CD8-positive, alpha-beta T cell (primary cell): ENCODE measurements at regions of chr2 and their contacts with region 1.

Region 1: GRCh38 chr2:24971536-24972314 is at the start of gene DNAJC27:
- DNase-seq: peak; percentile 92 to 99 (median 98)
- ATAC-seq: peak; percentile 87
- H3K4me3 ChIP-seq: peak within 1 kb of the TSS; percentile 68 to 98
- H3K4me3 Mint-ChIP-seq: peak within 1 kb of the TSS; percentile 96
- H3K27ac ChIP-seq: peak within 1 kb of the TSS; percentile 93 to 100
- H3K27ac Mint-ChIP-seq: peak within 1 kb of the TSS; percentile 100
- H3K4me1 ChIP-seq: peaks cover 17% of the 10 kb centered on the region
- H3K4me1 Mint-ChIP-seq: peaks cover 27% of the 10 kb centered on the region
- H3K27me3 ChIP-seq: no peaks in the 10 kb centered on the region
- H3K27me3 Mint-ChIP-seq: no peaks in the 10 kb centered on the region
- CTCF ChIP-seq: no peak
- total RNA-seq, gene DNAJC27: 18.9 to 19.1 TPM

Region 2: DNA sequence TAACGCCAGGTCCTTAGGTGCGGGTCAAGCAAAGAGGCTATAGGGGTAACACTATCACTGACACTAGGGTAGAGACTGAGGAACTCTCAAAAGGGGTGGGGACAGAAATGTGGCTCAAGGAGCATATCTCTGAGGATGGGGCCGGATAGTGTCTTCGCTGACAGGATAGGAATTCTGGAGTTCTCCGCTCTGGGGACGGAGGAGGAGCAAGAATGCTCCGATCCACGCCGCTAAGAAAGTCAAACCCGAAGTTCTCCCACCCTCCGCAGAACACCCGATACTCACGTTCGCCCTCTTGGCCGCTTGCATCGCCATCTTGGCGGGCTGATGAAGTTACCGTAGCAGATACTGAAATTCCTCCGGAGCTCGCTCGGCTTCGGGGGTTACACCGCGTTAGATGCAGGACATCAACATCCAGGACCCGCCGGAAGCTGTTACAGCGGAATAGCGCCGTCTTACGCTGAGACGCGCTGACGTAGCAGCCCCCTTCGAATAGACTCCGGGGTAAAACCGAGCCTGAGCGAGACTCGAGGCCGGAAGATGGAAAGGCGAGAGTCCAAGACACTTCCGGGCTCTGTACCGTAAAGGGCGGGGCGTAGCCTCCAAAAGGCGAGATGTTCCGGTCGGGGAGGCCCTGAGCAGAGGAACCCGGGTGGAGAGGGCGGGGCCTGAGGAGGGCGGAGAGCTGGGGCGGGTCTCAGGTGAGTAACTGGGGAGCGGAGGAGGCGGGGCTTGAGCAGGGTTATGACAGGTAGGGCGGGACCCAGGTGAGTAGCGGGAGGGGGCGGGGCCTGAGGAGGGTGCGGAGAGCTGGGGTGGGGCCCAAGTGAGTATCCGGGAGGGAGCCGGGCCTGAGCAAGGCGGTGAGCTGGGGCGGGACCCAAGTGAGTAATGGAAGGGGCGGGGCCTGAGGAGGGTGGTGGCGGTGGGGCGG is 895.5 kb before region 1 on chr2 and contains the start of gene SF3B6:
- CTCF ChIA-PET with region 1: no interaction called
- POLR2A ChIA-PET with region 1: no interaction called
- intact Hi-C with region 1: loop called in 1 of 2 experiments (anchors 5 kb)
- DNase-seq: peak; percentile 98 to 100 (median 100)
- ATAC-seq: peak; percentile 83
- H3K4me3 ChIP-seq: peak within 1 kb of the TSS; percentile 87 to 100
- H3K4me3 Mint-ChIP-seq: peak within 1 kb of the TSS; percentile 100
- H3K27ac ChIP-seq: peak within 1 kb of the TSS; percentile 91 to 96
- H3K27ac Mint-ChIP-seq: peak within 1 kb of the TSS; percentile 100
- H3K4me1 ChIP-seq: peaks cover 19% of the 10 kb centered on the region
- H3K4me1 Mint-ChIP-seq: peaks cover 36% of the 10 kb centered on the region
- H3K27me3 ChIP-seq: no peaks in the 10 kb centered on the region
- H3K27me3 Mint-ChIP-seq: no peaks in the 10 kb centered on the region
- CTCF ChIP-seq: no peak
- total RNA-seq, gene SF3B6: 69.7 to 78.9 TPM

Region 3: GRCh38 chr2:24792874-24793760 is 178.6 kb before region 1 on chr2 and contains the starts of genes CENPO and PTRHD1:
- CTCF ChIA-PET with region 1: no interaction called
- POLR2A ChIA-PET with region 1: no interaction called
- intact Hi-C with region 1: loop called (anchors 1 to 2 kb)
- DNase-seq: peak; percentile 89 to 97 (median 94)
- ATAC-seq: peak; percentile 96
- H3K4me3 ChIP-seq: peak within 1 kb of the TSS; percentile 92 to 97
- H3K4me3 Mint-ChIP-seq: peak within 1 kb of the TSS; percentile 98
- H3K27ac ChIP-seq: peak within 1 kb of the TSS; percentile 90 to 98
- H3K27ac Mint-ChIP-seq: peak within 1 kb of the TSS; percentile 99
- H3K4me1 ChIP-seq: peaks cover 12% of the 10 kb centered on the region
- H3K4me1 Mint-ChIP-seq: peaks cover 18% of the 10 kb centered on the region
- H3K27me3 ChIP-seq: no peaks in the 10 kb centered on the region
- H3K27me3 Mint-ChIP-seq: no peaks in the 10 kb centered on the region
- CTCF ChIP-seq: peak; percentile 68
- total RNA-seq, gene CENPO: 3.4 to 3.6 TPM
- total RNA-seq, gene PTRHD1: 12.2 to 19.0 TPM

Region 4: GRCh38 chr2:25131567-25132298 is 160.0 kb after region 1 on chr2:
- CTCF ChIA-PET with region 1: interaction called, 38 read pairs
- POLR2A ChIA-PET with region 1: interaction called, 4 read pairs
- intact Hi-C with region 1: loop called in 1 of 2 experiments (anchors 1 kb)
- DNase-seq: peak in 3 of 9 experiments; percentile 21 to 27 (median 25)
- ATAC-seq: peak; percentile 34
- H3K4me3 ChIP-seq: no peak overlapping the region
- H3K4me3 Mint-ChIP-seq: peak overlapping the region; percentile 77
- H3K27ac ChIP-seq: no peak overlapping the region
- H3K27ac Mint-ChIP-seq: no peak overlapping the region
- H3K4me1 ChIP-seq: no peaks in the 10 kb centered on the region
- H3K4me1 Mint-ChIP-seq: peaks cover 12% of the 10 kb centered on the region
- H3K27me3 ChIP-seq: peaks cover 18 to 22% of the 10 kb centered on the region in 2 experiments
- H3K27me3 Mint-ChIP-seq: peaks cover 48% of the 10 kb centered on the region
- CTCF ChIP-seq: no peak

Region 5: DNA sequence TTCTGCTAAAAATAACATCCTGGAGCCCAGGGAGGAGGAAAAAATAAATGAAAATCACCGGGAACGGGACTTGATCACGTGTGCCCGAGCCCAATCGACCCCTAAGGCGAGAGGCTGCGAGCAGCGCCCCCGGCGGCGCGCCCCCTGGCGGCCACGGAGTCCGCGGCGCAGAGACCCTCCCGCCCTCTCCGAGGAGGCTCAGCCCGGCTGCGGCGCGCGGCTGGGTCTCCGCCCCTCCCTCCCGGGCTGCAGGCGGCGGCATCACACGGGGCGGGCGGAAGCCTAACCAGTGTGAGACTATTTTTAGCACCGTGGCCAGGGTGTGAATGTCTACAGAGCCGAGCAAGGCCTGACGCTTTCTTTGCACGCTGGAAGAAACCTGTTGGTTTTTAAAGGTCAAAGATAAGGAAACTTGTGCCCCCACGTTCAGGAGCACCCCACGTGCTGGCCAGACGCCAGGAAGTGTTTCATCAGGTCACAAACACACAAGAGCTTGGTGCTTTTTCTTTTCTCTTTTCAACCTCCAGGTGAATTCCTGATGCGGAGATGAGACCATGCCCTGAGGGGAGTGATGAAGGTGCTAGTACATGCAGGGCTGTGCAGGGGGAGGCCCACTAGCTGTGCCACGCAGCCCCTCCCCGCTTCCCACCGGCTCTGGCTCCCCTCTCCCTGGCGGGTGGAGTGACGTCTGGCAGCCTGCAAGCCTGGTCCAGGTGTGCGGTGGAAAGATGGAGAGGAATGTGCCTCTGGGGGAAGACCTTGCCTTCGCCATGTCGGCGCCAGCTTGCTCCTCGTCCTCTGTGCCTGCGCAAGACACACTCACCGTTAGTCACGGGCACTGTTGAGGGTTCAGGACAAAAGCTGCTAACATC is 405.3 kb after region 1 on chr2:
- CTCF ChIA-PET with region 1: no interaction called
- POLR2A ChIA-PET with region 1: no interaction called
- intact Hi-C with region 1: loop called (anchors 2 kb)
- DNase-seq: peak; percentile 83 to 98 (median 92)
- ATAC-seq: peak; percentile 97
- H3K4me3 ChIP-seq: peak overlapping the region; percentile 11 to 36
- H3K4me3 Mint-ChIP-seq: peak overlapping the region; percentile 72
- H3K27ac ChIP-seq: peak overlapping the region; percentile 36 to 69
- H3K27ac Mint-ChIP-seq: peak overlapping the region; percentile 95
- H3K4me1 ChIP-seq: peaks cover 33% of the 10 kb centered on the region
- H3K4me1 Mint-ChIP-seq: peaks cover 35% of the 10 kb centered on the region
- H3K27me3 ChIP-seq: no peaks in the 10 kb centered on the region
- H3K27me3 Mint-ChIP-seq: no peaks in the 10 kb centered on the region
- CTCF ChIP-seq: peak; percentile 98

Region 6: GRCh38 chr2:26033818-26034636 is 1062.3 kb after region 1 on chr2 and contains the start of gene RAB10:
- CTCF ChIA-PET with region 1: no interaction called
- POLR2A ChIA-PET with region 1: no interaction called
- intact Hi-C with region 1: loop called (anchors 5 kb)
- DNase-seq: peak; percentile 98 to 100 (median 99)
- ATAC-seq: peak; percentile 89
- H3K4me3 ChIP-seq: peak within 1 kb of the TSS; percentile 82 to 99
- H3K4me3 Mint-ChIP-seq: peak within 1 kb of the TSS; percentile 95
- H3K27ac ChIP-seq: peak within 1 kb of the TSS; percentile 92 to 93
- H3K27ac Mint-ChIP-seq: peak within 1 kb of the TSS; percentile 98
- H3K4me1 ChIP-seq: peaks cover 29% of the 10 kb centered on the region
- H3K4me1 Mint-ChIP-seq: peaks cover 40% of the 10 kb centered on the region
- H3K27me3 ChIP-seq: no peaks in the 10 kb centered on the region
- H3K27me3 Mint-ChIP-seq: no peaks in the 10 kb centered on the region
- CTCF ChIP-seq: no peak
- total RNA-seq, gene RAB10: 12.7 TPM